SK-N-SH (cell line): ENCODE measurements at regions of chr12 and their contacts with region 1.

Region 1: GRCh38 chr12:49974231-49974675 is 1.5 kb downstream of the AQP6 start:
- DNase-seq: peak; percentile 88
- H3K4me3 ChIP-seq: no peak overlapping the region
- H3K27ac ChIP-seq: peak overlapping the region in 1 of 2 experiments; percentile 73; a peak in 2 of 4 replicates
- H3K4me1 ChIP-seq: peaks cover 0 to 54% of the 10 kb centered on the region in 2 experiments; a peak in 2 of 4 replicates
- H3K27me3 ChIP-seq: no peaks in the 10 kb centered on the region
- CTCF ChIP-seq: peak; percentile 63
- EP300 ChIP-seq: no peak
- RAD21 ChIP-seq: peak; percentile 93

Region 2: DNA sequence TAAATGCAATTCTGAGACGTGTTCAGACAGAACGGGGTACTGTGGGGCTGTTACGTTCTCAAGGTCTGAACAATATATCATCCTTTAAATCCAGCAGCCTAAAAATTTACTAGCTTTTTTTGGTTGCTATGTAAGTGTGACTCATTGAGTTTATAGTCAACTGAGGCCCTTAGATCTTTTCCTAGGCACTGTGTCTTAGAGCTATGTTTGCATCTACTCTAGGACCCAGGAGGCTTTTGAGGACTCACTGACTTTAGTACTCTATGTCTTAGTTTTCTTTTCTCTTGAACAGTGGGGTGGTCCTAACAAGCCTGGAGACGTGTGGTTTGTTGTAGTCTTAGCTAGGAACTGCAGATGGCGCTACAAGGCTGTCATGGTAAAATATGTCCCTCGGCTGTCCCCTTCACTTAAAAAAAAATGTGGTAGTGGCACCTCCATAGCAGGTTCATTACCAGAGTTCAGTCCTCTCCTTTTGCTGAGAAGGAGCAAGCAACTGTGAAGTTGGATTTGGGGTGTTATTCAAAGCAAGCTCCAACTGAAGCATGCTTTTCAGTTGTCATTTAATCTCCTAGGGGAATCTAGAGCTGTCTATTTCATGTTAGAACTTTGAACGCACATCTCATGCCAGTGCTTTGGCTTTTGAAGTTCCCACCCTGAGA is 615.6 kb before region 1 on chr12:
- CTCF ChIA-PET with region 1: no interaction called
- POLR2A ChIA-PET with region 1: no interaction called
- DNase-seq: peak; percentile 74
- H3K4me3 ChIP-seq: peak overlapping the region in 1 of 2 experiments; percentile 43; a peak in 1 of 4 replicates
- H3K27ac ChIP-seq: peak overlapping the region in 1 of 2 experiments; percentile 44; a peak in 2 of 4 replicates
- H3K4me1 ChIP-seq: no peaks in the 10 kb centered on the region
- H3K27me3 ChIP-seq: no peaks in the 10 kb centered on the region
- CTCF ChIP-seq: peak; percentile 92
- EP300 ChIP-seq: no peak
- RAD21 ChIP-seq: peak; percentile 97

Region 3: GRCh38 chr12:49888461-49889151 is 85.6 kb before region 1 on chr12:
- CTCF ChIA-PET with region 1: no interaction called
- POLR2A ChIA-PET with region 1: no interaction called
- DNase-seq: no peak
- H3K4me3 ChIP-seq: no peak overlapping the region
- H3K27ac ChIP-seq: no peak overlapping the region
- H3K4me1 ChIP-seq: peaks cover 0 to 26% of the 10 kb centered on the region in 2 experiments; a peak in 1 of 4 replicates
- H3K27me3 ChIP-seq: no peaks in the 10 kb centered on the region
- CTCF ChIP-seq: no peak
- EP300 ChIP-seq: no peak
- RAD21 ChIP-seq: no peak

Region 4: DNA sequence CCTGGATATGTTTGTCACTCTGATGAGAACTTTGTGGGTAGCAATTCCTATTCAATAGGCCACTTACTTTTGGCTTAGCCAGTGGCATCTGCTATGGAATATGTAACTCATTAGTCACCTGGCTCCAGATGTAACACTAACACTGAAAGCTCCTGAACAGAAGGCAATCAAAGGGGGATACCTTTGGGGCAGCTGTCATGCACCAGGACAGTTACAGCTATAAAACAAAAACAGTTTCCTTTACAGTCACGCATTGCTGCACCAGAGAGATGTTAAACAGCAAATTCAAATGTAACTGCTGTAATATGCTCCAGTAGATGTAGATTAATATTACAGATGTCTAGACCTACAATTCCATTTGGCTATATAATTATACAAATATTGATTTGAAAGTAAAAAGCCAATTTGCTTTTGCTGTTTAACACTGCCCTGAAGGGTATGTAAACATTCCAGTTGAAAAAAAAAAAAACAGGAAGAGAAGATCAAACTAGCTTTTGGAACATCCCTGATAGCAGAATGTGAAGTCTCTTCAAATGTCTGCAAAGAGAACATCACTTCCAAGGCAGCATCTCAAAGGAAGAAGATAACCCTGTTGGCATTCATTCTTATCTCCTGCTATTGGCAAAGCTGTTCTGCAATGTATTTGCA is 32.7 kb after region 1 on chr12:
- CTCF ChIA-PET with region 1: interaction called, 44 read pairs
- POLR2A ChIA-PET with region 1: no interaction called
- DNase-seq: no peak
- H3K4me3 ChIP-seq: no peak overlapping the region
- H3K27ac ChIP-seq: peak overlapping the region; percentile 3 to 87; a peak in 3 of 4 replicates
- H3K4me1 ChIP-seq: peaks cover 6 to 41% of the 10 kb centered on the region in 2 experiments; a peak in 2 of 4 replicates
- H3K27me3 ChIP-seq: no peaks in the 10 kb centered on the region
- CTCF ChIP-seq: no peak
- EP300 ChIP-seq: peak in 1 of 2 experiments; percentile 80; a peak in 2 of 4 replicates
- RAD21 ChIP-seq: no peak

Region 5: DNA sequence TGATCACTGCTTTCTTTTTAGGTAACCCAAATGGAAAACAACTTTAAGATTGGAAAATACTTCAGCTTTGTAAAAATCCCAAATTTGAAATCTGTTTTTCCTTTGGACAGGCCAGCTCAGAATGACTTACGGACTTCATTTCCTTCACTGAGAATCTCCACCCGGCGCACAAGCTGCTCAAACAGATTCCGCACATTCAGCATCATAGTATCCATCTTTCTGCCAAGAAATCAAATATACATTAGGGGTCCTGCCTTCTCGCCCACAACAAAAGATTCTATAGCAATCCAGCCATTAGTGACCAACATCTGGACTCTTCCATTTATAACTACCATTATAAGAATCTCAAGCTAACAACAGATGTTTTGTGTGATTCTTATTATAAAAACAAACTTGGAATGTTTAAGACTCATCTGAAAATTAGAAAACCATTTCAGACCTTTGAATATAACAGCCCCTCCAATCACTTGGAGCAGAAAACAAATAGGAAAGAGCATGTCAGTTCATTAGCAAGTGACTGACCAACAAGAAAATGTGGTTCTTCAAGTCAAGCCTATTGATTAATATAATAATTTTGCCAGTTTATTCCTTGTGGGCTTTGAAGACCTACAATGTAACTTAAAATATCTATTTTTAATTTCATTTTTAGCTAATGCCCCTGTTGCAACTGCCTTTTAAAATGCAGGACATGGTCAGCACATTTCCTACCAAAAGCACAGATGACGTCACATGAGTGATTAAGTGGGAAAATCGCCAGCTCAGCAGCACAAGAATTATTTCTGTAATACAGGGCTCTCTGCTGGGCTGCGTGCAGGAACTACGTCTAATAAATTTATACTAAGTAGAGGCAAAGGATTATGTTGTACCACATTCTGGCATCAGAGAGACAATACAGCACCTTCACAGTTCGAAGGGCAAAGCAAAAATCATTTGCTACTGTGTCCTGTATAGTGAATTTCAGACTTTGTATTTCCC is 42.5 kb after region 1 on chr12:
- CTCF ChIA-PET with region 1: interaction called, 12 read pairs
- POLR2A ChIA-PET with region 1: interaction called, 5 read pairs
- DNase-seq: no peak
- H3K4me3 ChIP-seq: no peak overlapping the region
- H3K27ac ChIP-seq: peak overlapping the region; percentile 55 to 58
- H3K4me1 ChIP-seq: peaks cover 3 to 7% of the 10 kb centered on the region in 2 experiments; a peak in 3 of 4 replicates
- H3K27me3 ChIP-seq: no peaks in the 10 kb centered on the region
- CTCF ChIP-seq: no peak
- EP300 ChIP-seq: no peak
- RAD21 ChIP-seq: peak; percentile 26; the same call in 1 of the 2 replicates